Left colon (tissue), 2 donors: ENCODE measurements at regions of chr2 and their contacts with region 1.

Region 1: GRCh38 chr2:165203689-165204559 is at the start of gene SCN3A:
- DNase-seq: peak in 1 of 2 donors; percentile 23
- ATAC-seq: peak; percentile 18
- total RNA-seq, gene SCN3A: 0.43 to 1.4 TPM

Region 2: DNA sequence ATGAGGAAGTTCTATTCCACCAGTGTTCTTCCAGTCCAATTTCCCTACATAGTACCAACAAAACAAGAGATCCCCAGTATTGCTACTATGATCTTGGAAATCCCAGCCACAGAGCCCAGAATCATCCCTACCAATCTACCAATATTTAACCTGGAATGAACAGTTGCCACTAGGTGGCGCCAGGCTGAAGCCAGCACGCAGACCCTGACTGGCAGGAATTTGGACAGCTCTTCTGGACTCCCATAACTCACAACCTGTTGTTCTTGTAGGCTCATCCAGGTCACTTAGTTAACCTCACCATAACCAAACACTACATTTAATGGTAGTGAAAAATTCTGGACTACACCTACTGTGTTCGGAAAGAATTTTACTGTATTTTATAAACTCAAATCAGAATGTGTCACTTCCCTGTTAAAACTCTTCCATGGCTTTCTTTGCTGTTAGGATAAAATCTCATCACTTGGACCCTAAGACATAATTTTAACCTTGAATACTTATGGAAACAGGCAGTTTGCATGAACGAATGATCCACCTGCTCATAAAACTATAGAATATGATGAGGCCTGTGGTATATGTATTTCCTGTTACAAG is 188.8 kb before region 1 on chr2:
- intact Hi-C with region 1: loop called in 1 of 2 experiments (anchors 10 kb)
- DNase-seq: peak; percentile 39 to 77
- ATAC-seq: peak; percentile 60